AG04449 (cell line): ENCODE measurements at regions of chr4 and their contacts with region 1.

Region 1: DNA sequence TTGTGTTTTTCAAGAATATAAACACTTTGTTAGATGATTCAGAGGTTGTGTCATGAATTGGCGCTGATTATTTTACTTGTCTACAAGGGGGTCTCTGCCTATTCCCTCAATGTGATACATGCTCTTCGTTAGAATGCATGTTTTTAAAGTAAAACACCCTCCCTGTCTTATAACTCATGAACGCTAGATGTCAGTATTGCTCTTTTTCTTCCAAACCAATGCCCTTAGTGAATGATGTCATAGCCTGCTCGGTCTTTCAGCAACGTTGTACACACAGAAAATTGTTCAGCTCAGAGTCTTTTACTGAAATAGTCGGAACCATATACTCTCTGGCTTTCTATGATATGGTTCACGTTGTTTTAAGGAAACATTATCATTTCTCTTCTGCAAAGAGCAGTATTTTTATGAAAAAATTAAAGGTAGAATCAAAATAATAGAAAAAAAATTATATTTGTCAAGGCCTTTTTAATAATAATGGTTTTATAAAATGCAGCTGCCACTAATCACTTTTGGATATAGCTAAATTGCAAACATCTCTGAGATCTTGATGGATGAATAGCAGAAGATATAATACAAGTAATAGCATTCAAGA is 292.9 kb downstream of the TLL1 start:
- DNase-seq: no peak
- H3K4me3 ChIP-seq: no peak overlapping the region
- CTCF ChIP-seq: peak; percentile 61

Region 2: GRCh38 chr4:166585491-166585890 is 419.6 kb after region 1 on chr4:
- CTCF ChIA-PET with region 1: interaction called, 11 read pairs
- POLR2A ChIA-PET with region 1: no interaction called
- DNase-seq: no peak
- H3K4me3 ChIP-seq: no peak overlapping the region
- CTCF ChIP-seq: no peak

Region 3: DNA sequence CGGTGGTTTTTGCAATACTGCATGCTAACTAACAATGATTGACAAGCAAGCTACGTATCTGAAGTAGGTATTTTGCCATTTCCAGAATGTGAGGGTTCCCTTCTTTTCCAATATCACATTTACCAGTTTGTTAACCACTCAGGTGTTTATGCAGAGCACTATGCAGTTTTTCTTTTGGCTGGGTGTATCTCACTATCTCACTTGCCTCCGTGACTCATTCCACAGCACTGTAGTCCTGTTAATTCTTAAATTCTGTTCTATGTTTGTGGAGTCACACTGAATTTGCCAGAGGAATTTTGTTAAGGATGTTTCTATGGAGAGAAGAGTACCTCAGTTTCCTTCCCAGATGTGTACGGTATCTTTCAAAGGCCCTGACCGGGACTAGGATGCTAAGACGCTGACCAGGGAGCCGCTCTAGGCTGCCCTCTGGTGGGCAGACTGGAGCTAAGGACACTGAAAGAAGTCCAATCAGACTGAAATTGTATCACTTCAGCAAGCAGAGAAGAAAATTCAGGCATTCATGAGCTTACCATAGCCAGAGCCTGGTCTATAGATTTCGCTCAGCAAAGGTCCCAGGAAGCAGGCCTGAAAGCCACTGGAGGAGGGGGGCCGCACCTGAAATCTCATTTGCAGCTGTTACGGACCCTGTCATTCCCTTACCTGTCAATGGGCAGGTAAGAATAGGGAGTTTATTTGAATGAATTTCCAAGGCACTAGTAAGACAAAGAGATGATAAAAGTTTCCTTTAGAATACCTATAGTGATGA is 1456.7 kb after region 1 on chr4:
- CTCF ChIA-PET with region 1: interaction called, 16 read pairs
- POLR2A ChIA-PET with region 1: no interaction called
- DNase-seq: peak; percentile 2
- H3K4me3 ChIP-seq: no peak overlapping the region
- CTCF ChIP-seq: peak; percentile 83